T-cell (primary cell): ENCODE measurements at regions of chr11 and their contacts with region 1.

Region 1: GRCh38 chr11:119236490-119236889 is 30.4 kb downstream of the CBL start:
- DNase-seq: no peak
- ATAC-seq: no peak
- H3K4me3 ChIP-seq: no peak overlapping the region
- H3K4me3 Mint-ChIP-seq: no peak overlapping the region
- H3K27ac ChIP-seq: no peak overlapping the region
- H3K27ac Mint-ChIP-seq: peak overlapping the region; percentile 7 to 46
- H3K4me1 ChIP-seq: peaks cover 12 to 15% of the 10 kb centered on the region in 2 experiments
- H3K4me1 Mint-ChIP-seq: peaks cover 46 to 55% (median 53%) of the 10 kb centered on the region in 3 donors
- H3K27me3 ChIP-seq: no peaks in the 10 kb centered on the region
- H3K27me3 Mint-ChIP-seq: no peaks in the 10 kb centered on the region

Region 2: GRCh38 chr11:119181677-119182412 is 54.6 kb before region 1 on chr11:
- CTCF ChIA-PET with region 1: no interaction called
- POLR2A ChIA-PET with region 1: no interaction called
- DNase-seq: no peak
- ATAC-seq: no peak
- H3K4me3 ChIP-seq: no peak overlapping the region
- H3K4me3 Mint-ChIP-seq: no peak overlapping the region
- H3K27ac ChIP-seq: no peak overlapping the region
- H3K27ac Mint-ChIP-seq: no peak overlapping the region
- H3K4me1 ChIP-seq: peaks cover 9 to 16% of the 10 kb centered on the region in 2 experiments
- H3K4me1 Mint-ChIP-seq: peaks cover 6 to 13% (median 9%) of the 10 kb centered on the region in 3 donors
- H3K27me3 ChIP-seq: peaks cover 0 to 10% of the 10 kb centered on the region in 2 experiments
- H3K27me3 Mint-ChIP-seq: no peaks in the 10 kb centered on the region

Region 3: GRCh38 chr11:119273721-119274120 is 37.2 kb after region 1 on chr11:
- CTCF ChIA-PET with region 1: no interaction called
- POLR2A ChIA-PET with region 1: interaction called, 3 to 11 read pairs
- DNase-seq: no peak
- ATAC-seq: no peak
- H3K4me3 ChIP-seq: no peak overlapping the region
- H3K4me3 Mint-ChIP-seq: no peak overlapping the region
- H3K27ac ChIP-seq: no peak overlapping the region
- H3K27ac Mint-ChIP-seq: peak overlapping the region in 1 of 2 donors; percentile 69
- H3K4me1 ChIP-seq: peaks cover 4 to 10% of the 10 kb centered on the region in 2 experiments
- H3K4me1 Mint-ChIP-seq: peaks cover 16 to 26% (median 17%) of the 10 kb centered on the region in 3 donors
- H3K27me3 ChIP-seq: no peaks in the 10 kb centered on the region
- H3K27me3 Mint-ChIP-seq: no peaks in the 10 kb centered on the region